ENCODE measurements at regions of chr3 and their contacts with region 1.

Region 1: DNA sequence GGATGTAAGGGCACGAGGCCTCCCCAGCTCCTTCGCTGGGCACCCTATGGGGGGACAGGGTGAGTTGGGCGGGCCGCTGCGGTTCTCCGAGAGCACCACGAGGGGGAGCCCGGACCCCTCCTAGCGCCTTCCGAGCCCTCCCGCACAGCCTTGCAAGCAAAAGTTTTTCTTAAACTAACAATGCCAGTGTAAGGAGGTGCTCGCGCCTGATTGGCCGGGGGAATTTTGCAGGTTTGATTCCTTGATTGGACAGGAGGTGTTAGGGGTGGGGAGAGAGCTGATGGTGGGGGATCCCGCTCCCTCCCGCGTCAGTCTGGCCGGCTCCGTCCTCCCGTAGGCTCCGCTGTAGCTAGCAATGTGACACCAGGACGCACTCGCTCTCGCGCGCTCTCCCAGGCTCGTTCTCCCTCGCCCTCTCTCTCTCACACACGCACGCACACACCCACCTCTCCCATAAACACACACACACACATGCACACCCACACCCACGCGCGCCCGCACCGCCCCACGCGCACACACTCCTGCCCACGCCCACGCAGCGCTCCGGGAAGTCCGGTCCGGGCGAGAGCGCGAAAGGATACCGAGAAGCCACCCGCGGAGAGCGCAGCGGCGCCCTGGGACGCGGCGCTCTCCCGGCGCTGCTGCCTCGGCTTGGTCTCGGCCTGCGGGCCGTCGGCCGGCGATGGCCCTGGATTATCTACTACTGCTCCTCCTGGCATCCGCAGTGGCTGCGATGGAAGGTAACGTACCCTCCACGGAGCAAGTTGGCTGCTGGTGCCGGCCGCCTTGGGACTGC is at the start of gene EPHB1:
- DNase-seq: peak; percentile 94
- ATAC-seq: peak; percentile 83
- H3K4me3 ChIP-seq: peak within 1 kb of the TSS; percentile 74
- H3K27ac ChIP-seq: peak within 1 kb of the TSS; percentile 54
- H3K4me1 ChIP-seq: 0 out of 2 replicates have a peak, but pooled peaks cover 3% of the 10 kb centered on the region
- H3K27me3 ChIP-seq: no peaks in the 10 kb centered on the region; a peak in 1 of 4 replicates
- CTCF ChIP-seq: peak; percentile 89 to 94 (median 90)
- EP300 ChIP-seq: peak in 1 of 2 experiments; percentile 14; a peak in 1 of 4 replicates
- POLR2A ChIP-seq: peak; percentile 75
- RAD21 ChIP-seq: peak; percentile 91
- polyA plus RNA-seq, gene EPHB1: 0.34 to 0.49 TPM

Region 2: DNA sequence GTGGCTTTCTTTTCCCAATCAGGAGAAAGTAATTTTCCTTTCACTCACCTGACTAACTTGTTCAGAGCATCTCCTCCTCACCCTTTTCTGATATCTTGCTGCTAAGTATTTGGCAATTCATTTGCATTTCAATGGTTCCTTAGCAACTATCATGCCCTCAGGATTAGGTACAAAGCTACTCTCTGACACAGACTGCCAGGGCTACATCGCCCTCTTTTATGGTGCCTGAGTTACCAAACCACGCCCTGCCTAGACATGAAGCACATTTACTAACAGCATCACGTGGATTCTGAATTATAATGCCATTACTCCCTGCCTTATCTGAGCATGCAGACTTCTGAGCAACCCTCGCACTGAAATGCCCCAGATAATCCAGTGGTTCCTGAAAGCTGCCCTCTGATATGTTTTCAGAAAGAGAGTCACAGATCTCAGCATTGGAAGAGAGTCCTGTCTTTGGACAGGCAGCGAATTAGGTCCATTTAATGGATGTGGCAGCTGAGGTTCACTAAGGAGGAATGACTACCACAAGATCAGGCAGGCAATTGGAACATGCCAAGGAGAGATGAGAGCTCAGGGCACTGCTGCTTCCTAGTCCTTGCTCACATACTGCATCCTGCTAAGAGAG is 14.4 kb after region 1 on chr3:
- CTCF ChIA-PET with region 1: interaction called, 19 read pairs
- POLR2A ChIA-PET with region 1: interaction called, 7 read pairs
- RAD21 ChIA-PET with region 1: interaction called, 42 read pairs
- SMC1A ChIA-PET with region 1: interaction called, 24 read pairs
- in situ Hi-C with region 1: no loop called
- intact Hi-C with region 1: no loop called
- DNase-seq: no peak
- ATAC-seq: peak; percentile 37
- H3K4me3 ChIP-seq: no peak overlapping the region
- H3K27ac ChIP-seq: no peak overlapping the region
- H3K4me1 ChIP-seq: peaks cover 15% of the 10 kb centered on the region
- H3K27me3 ChIP-seq: no peaks in the 10 kb centered on the region
- CTCF ChIP-seq: no peak
- EP300 ChIP-seq: no peak
- POLR2A ChIP-seq: no peak
- RAD21 ChIP-seq: no peak

Region 3: DNA sequence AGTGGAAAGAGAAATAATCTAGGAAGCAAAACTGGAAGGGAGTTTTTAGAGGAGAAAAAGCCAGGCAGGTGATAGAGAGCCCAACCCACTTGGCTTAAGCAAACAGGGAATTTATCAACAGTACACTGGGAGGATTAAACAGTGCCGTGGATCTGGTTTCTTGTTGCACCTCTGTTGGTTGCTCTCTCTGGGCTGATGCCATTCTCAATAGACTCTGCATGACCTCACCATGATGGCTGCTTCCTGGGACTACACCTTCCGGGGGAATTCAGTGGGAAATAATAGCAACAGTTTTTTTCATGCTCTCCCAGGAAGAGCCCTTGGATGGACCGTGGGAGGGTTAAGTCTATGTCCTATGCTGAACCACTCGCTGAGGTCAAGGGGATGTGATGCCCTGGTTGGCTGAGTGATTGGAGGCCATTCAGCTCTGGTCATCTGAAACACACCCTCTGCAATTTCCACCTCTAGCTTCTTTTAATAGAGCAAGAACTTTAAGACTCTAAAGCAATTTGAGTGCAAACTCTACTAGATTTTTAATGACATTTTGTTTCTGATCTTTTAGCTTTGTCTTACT is 74.1 kb after region 1 on chr3:
- CTCF ChIA-PET with region 1: no interaction called
- POLR2A ChIA-PET with region 1: no interaction called
- RAD21 ChIA-PET with region 1: no interaction called
- SMC1A ChIA-PET with region 1: no interaction called
- in situ Hi-C with region 1: no loop called
- intact Hi-C with region 1: no loop called
- DNase-seq: no peak
- ATAC-seq: no peak
- H3K4me3 ChIP-seq: no peak overlapping the region
- H3K27ac ChIP-seq: no peak overlapping the region
- H3K4me1 ChIP-seq: no peaks in the 10 kb centered on the region; the same call in 1 of the 2 replicates
- H3K27me3 ChIP-seq: no peaks in the 10 kb centered on the region
- CTCF ChIP-seq: no peak
- EP300 ChIP-seq: no peak
- POLR2A ChIP-seq: no peak
- RAD21 ChIP-seq: no peak

Region 4: DNA sequence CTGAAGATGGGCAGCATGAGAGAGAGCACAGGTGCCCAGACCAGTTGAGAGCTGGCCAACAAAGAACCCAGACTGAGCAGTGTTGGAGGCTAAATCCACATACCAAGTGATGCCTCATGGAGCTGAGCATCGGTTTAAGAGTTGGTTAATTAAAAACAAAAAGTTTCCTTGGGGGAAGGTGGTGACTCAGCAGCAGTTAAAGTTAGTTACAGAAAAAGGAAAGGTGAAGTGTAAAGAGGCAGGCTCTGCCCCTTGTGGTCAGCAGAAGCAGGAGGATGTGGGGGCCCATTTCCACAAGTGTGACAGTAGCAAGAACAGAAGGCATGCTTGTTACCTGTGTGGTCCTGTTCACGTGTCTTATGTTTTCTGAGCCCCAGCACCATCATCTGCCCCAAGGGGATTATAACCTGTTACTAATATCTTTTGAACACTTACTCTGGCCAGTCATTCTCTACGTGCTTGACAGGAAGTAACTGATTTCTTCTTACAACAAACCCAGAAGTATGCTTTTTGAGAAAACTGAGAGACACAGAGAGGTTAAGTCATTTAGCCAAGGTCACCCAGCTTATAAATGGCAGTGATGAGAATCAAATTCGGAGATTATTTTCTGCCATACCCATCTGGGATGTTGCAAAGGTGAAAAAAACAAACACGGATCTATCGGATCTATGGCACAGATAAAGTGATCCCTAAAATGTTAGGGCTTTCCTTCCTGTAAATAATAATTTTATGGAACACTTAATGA is 90.9 kb after region 1 on chr3:
- CTCF ChIA-PET with region 1: interaction called, 29 read pairs
- POLR2A ChIA-PET with region 1: interaction called, 3 read pairs
- RAD21 ChIA-PET with region 1: interaction called, 66 read pairs
- SMC1A ChIA-PET with region 1: interaction called, 59 read pairs
- in situ Hi-C with region 1: no loop called
- intact Hi-C with region 1: loop called (anchors 1 kb)
- DNase-seq: peak; percentile 95
- ATAC-seq: peak; percentile 94
- H3K4me3 ChIP-seq: 0 out of 2 replicates have a peak overlapping the region, but pooled peaks have one; percentile 9
- H3K27ac ChIP-seq: peak overlapping the region; percentile 54
- H3K4me1 ChIP-seq: peaks cover 29% of the 10 kb centered on the region
- H3K27me3 ChIP-seq: no peaks in the 10 kb centered on the region
- CTCF ChIP-seq: peak; percentile 33 to 51 (median 41); a peak in 4 of 6 replicates
- EP300 ChIP-seq: peak; percentile 71 to 88
- POLR2A ChIP-seq: no peak
- RAD21 ChIP-seq: 0 out of 2 replicates have a peak, but pooled peaks have one; percentile 10

Region 5: GRCh38 chr3:134918441-134918840 is 123.3 kb after region 1 on chr3:
- CTCF ChIA-PET with region 1: interaction called, 7 read pairs
- POLR2A ChIA-PET with region 1: no interaction called
- RAD21 ChIA-PET with region 1: interaction called, 9 read pairs
- SMC1A ChIA-PET with region 1: interaction called, 10 read pairs
- in situ Hi-C with region 1: no loop called
- intact Hi-C with region 1: no loop called
- DNase-seq: peak; percentile 78
- ATAC-seq: peak; percentile 97
- H3K4me3 ChIP-seq: no peak overlapping the region
- H3K27ac ChIP-seq: peak overlapping the region; percentile 80
- H3K4me1 ChIP-seq: peaks cover 21% of the 10 kb centered on the region
- H3K27me3 ChIP-seq: no peaks in the 10 kb centered on the region
- CTCF ChIP-seq: no peak
- EP300 ChIP-seq: 0 out of 4 replicates have a peak, but pooled peaks of 1 of the 2 experiments have one; percentile 10
- POLR2A ChIP-seq: no peak
- RAD21 ChIP-seq: no peak

Region 6: GRCh38 chr3:135018149-135018923 is 223.2 kb after region 1 on chr3:
- CTCF ChIA-PET with region 1: interaction called, 8 read pairs
- POLR2A ChIA-PET with region 1: no interaction called
- RAD21 ChIA-PET with region 1: interaction called, 21 read pairs
- SMC1A ChIA-PET with region 1: interaction called, 7 read pairs
- in situ Hi-C with region 1: no loop called
- intact Hi-C with region 1: no loop called
- DNase-seq: no peak
- ATAC-seq: peak; percentile 82
- H3K4me3 ChIP-seq: no peak overlapping the region
- H3K27ac ChIP-seq: peak overlapping the region; percentile 43
- H3K4me1 ChIP-seq: peaks cover 18% of the 10 kb centered on the region
- H3K27me3 ChIP-seq: no peaks in the 10 kb centered on the region
- CTCF ChIP-seq: no peak
- EP300 ChIP-seq: 0 out of 4 replicates have a peak, but pooled peaks of 1 of the 2 experiments have one; percentile 11
- POLR2A ChIP-seq: no peak
- RAD21 ChIP-seq: no peak

Region 7: GRCh38 chr3:135229018-135229495 is 433.9 kb after region 1 on chr3:
- CTCF ChIA-PET with region 1: interaction called, 13 read pairs
- POLR2A ChIA-PET with region 1: interaction called, 3 read pairs
- RAD21 ChIA-PET with region 1: interaction called, 28 read pairs
- SMC1A ChIA-PET with region 1: interaction called, 10 read pairs
- in situ Hi-C with region 1: no loop called
- intact Hi-C with region 1: no loop called
- DNase-seq: no peak
- ATAC-seq: no peak
- H3K4me3 ChIP-seq: no peak overlapping the region
- H3K27ac ChIP-seq: no peak overlapping the region
- H3K4me1 ChIP-seq: peaks cover 20% of the 10 kb centered on the region
- H3K27me3 ChIP-seq: no peaks in the 10 kb centered on the region
- CTCF ChIP-seq: no peak
- EP300 ChIP-seq: no peak
- POLR2A ChIP-seq: no peak
- RAD21 ChIP-seq: no peak

Region 8: DNA sequence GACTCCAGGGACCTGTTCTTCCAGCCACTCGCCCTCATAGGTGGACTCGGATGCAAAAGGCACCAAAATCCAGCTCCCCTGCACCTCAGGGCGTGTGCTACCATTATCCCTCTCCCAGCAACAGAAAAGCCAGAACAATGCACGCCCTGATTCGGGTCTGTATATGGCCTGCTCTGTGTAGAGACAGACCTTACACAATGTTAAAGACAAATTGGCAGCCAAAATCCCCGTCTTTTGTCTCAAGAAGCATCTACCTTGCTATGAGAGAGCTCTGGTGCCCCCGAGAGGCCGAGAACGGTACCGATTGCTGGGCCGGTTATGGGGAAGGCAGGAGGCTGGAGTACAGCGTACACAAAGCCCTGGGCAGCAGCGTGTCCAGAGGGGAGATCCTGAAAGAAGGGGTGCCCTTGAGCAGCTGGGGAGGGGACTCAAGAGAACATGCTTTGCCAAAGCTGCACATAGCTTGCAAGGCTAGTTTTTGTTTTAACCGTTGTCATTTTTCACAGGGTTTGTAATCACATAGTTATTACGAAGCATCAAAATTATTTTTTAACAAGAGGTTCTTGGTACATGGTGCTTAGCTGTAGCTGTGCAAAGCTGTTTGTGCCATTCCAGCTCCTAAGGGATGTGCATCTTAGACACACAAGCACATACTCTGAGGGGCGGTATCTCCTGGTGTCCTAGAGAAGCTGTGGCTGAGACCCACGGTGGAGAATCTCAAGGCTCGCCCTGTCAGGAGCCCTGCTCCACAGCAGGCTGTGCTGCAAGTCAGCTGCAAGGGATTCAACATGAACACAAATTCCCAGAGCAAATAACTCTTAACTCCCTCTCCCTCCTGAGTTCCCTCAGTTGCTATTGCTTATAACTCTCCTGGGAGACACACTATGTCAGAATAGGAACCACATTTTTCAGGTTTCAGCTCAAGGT is 708.9 kb after region 1 on chr3:
- CTCF ChIA-PET with region 1: interaction called, 88 read pairs
- POLR2A ChIA-PET with region 1: no interaction called
- RAD21 ChIA-PET with region 1: interaction called, 70 read pairs
- SMC1A ChIA-PET with region 1: interaction called, 64 read pairs
- in situ Hi-C with region 1: loop called (anchors 5 kb)
- intact Hi-C with region 1: loop called (anchors 1 kb)
- DNase-seq: peak; percentile 13
- ATAC-seq: peak; percentile 99
- H3K4me3 ChIP-seq: no peak overlapping the region
- H3K27ac ChIP-seq: no peak overlapping the region
- H3K4me1 ChIP-seq: no peaks in the 10 kb centered on the region
- H3K27me3 ChIP-seq: no peaks in the 10 kb centered on the region; a peak in 1 of 4 replicates
- CTCF ChIP-seq: peak; percentile 76 to 81 (median 80)
- EP300 ChIP-seq: no peak
- POLR2A ChIP-seq: no peak
- RAD21 ChIP-seq: peak; percentile 79

Measured in GM12878 (cell line).